ENCODE measurements at regions of chr16 and their contacts with region 1.

Region 1: DNA sequence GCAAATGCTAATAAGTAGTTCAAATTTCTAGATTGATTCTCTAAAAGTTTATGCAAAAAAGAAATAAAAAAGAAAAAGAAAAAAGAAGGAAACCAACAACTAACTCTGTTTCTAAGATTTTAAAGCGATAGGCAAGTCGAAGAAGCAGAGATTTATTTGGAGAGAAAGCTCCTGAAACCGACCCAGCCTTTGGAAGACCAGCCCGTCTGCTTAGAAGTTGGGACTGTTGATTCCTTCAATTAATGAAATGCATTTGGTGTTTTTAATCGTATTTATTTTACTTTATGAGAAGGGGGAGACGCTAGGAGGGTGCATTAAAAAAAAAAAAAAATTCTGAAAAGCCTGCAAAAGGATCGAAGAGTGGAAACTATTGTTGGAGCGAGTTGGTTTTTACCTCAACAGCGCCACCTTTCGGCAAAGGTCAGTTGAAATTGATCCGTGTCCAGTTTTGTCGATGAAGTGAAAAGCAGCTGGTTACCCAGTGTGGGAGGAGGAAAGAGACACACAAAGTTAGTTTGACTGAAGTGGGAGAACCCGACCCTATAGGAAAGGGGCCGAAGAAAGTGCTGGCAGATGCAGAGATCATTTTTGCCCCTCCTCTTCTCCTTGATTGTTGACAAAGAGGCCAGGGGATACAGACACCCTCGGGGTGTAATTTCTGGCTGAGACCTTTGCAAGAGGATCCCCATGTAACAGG is 1.5 kb upstream of the MAF start:
- DNase-seq: peak; percentile 63 to 88
- ATAC-seq: peak; percentile 8 to 68 (median 51)
- H3K4me3 ChIP-seq: peak overlapping the region; percentile 57 to 85 (median 72)
- H3K27ac ChIP-seq: peak overlapping the region; percentile 64 to 96 (median 92)
- H3K4me1 ChIP-seq: peaks cover 0 to 19% (median 6%) of the 10 kb centered on the region in 9 donors
- H3K27me3 ChIP-seq: peaks cover 0 to 5% (median 0%) of the 10 kb centered on the region in 7 donors
- CTCF ChIP-seq: peak; percentile 68 to 85 (median 80)

Region 2: DNA sequence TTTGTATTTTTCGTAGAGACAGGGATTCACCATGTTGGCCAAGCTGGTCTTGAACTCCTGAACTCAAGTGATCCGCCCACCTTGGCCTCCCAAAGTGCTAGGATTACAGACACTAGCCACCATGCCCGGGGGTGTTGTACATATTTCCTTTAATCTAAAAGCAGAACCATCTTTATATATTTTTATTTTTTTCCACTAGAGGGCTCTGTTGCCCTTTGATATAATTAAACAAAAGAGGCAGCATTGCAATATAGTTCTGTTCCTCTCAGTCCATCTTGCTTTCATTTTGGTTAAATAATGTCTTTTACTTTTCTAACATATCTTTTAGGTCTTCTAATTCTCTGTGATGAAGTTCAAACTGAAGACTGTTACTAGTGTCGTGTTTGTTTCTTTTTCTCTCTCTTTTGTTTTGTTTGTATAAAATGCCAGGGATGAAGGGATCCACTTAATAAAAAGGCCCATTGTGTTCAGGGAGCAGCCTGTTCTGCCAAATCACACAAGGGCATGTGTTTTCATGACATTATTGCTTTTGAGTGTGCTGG is 1479.2 kb before region 1 on chr16:
- intact Hi-C with region 1: loop called in 4 of 10 experiments (anchors 10 kb)
- DNase-seq: no peak
- ATAC-seq: peak in 7 of 8 donors; percentile 67 to 84 (median 72)
- H3K4me3 ChIP-seq: no peak overlapping the region
- H3K27ac ChIP-seq: peak overlapping the region in 5 of 10 donors; percentile 1 to 46 (median 31)
- H3K4me1 ChIP-seq: peaks cover 0 to 26% (median 15%) of the 10 kb centered on the region in 9 donors
- H3K27me3 ChIP-seq: no peaks in the 10 kb centered on the region
- CTCF ChIP-seq: peak in 8 of 9 donors; percentile 46 to 74 (median 58)

Region 3: GRCh38 chr16:78770353-78771091 is 831.6 kb before region 1 on chr16:
- intact Hi-C with region 1: loop called in 2 of 10 experiments (anchors 5 to 10 kb)
- DNase-seq: peak; percentile 70 to 79
- ATAC-seq: peak; percentile 61 to 90 (median 84)
- H3K4me3 ChIP-seq: no peak overlapping the region
- H3K27ac ChIP-seq: peak overlapping the region in 3 of 10 donors; percentile 33 to 52 (median 50)
- H3K4me1 ChIP-seq: peaks cover 0 to 16% (median 7%) of the 10 kb centered on the region in 9 donors
- H3K27me3 ChIP-seq: no peaks in the 10 kb centered on the region
- CTCF ChIP-seq: peak; percentile 77 to 92 (median 87)

Region 4: DNA sequence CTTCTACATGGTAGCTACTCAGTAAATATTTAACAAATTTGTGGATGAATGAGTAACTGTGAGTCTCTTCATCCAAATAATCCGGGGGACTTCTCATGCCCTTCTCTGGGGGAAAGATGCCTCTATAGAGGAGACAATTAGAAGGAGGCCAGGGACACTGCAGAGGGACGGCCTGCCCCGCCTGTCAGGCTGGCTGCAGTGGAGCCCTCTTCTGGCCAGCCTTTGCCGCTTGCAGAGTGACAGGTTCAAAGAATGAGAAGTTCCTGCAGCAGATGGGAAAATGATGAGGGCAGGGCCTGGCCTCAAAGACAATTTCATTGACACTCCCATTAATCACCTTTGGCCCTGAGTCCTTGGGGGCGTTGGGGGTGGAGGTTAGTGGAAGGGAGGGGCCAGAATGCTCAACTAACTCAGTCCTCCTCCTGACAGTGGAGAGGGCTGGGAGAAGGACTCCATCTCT is 340.6 kb before region 1 on chr16:
- intact Hi-C with region 1: loop called in 3 of 10 experiments (anchors 5 to 10 kb)
- DNase-seq: peak; percentile 23 to 54
- ATAC-seq: peak in 6 of 8 donors; percentile 30 to 67 (median 56)
- H3K4me3 ChIP-seq: no peak overlapping the region
- H3K27ac ChIP-seq: peak overlapping the region in 1 of 10 donors; percentile 34
- H3K4me1 ChIP-seq: peaks cover 3 to 42% (median 13%) of the 10 kb centered on the region in 9 donors
- H3K27me3 ChIP-seq: peaks cover 0 to 8% (median 0%) of the 10 kb centered on the region in 7 donors
- CTCF ChIP-seq: peak in 8 of 9 donors; percentile 19 to 68 (median 53)

Region 5: GRCh38 chr16:79542237-79542774 is 59.8 kb before region 1 on chr16:
- intact Hi-C with region 1: loop called in 1 of 10 experiments (anchors 5 kb)
- DNase-seq: peak; percentile 74 to 77
- ATAC-seq: peak; percentile 90 to 97 (median 94)
- H3K4me3 ChIP-seq: no peak overlapping the region
- H3K27ac ChIP-seq: peak overlapping the region in 8 of 10 donors; percentile 7 to 74 (median 58)
- H3K4me1 ChIP-seq: peaks cover 4 to 19% (median 15%) of the 10 kb centered on the region in 9 donors
- H3K27me3 ChIP-seq: no peaks in the 10 kb centered on the region
- CTCF ChIP-seq: no peak

Region 6: DNA sequence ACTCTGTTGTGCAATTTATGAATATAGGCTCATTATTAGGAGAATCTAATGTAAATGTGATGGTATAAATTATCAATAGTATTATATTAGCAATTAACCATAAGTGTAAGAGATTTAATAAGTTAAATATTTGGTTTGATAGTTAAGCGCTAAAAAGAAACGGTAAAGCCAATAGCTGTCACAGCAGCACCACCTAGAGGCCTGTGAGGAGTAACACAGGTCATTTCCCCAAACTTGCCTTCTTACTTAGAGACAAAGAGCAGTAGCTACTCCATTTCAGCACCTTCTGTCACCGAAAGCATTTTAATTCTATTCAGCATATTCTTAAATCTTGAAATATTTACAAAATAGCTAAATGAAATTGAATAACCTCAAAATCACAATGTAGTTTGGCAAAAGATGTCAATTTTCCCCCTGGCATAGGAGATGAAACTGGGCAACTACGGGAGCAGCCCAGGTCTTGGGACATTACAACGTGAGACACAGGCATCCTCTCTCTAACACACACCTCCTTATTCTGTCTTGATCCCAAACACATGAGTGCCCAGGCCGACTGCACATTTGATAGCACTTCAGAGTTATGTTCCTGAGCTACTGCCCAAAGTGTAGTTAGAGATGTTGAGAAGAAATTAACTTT is 924.5 kb after region 1 on chr16:
- intact Hi-C with region 1: loop called in 2 of 10 experiments (anchors 5 to 10 kb)
- DNase-seq: peak in 1 of 2 donors; percentile 41
- ATAC-seq: peak in 4 of 8 donors; percentile 37 to 61 (median 55)
- H3K4me3 ChIP-seq: no peak overlapping the region
- H3K27ac ChIP-seq: no peak overlapping the region
- H3K4me1 ChIP-seq: peaks cover 0 to 7% (median 0%) of the 10 kb centered on the region in 9 donors
- H3K27me3 ChIP-seq: peaks cover 0 to 16% (median 10%) of the 10 kb centered on the region in 7 donors
- CTCF ChIP-seq: peak; percentile 68 to 95 (median 88)

Measured in heart right ventricle (tissue), 16 donors.